ENCODE measurements at regions of chr12 and their contacts with region 1.

Region 1: GRCh38 chr12:44774815-44775411 is 101.2 kb downstream of the NELL2 start:
- DNase-seq: peak; percentile 36 to 91
- H3K4me3 ChIP-seq: no peak overlapping the region
- H3K27ac ChIP-seq: no peak overlapping the region
- H3K4me1 ChIP-seq: peaks cover 0 to 2% (median 2%) of the 10 kb centered on the region in 4 experiments; a peak in 2 of 7 replicates
- H3K27me3 ChIP-seq: no peaks in the 10 kb centered on the region
- CTCF ChIP-seq: peak; percentile 80 to 89 (median 81)
- EP300 ChIP-seq: no peak
- POLR2A ChIP-seq: no peak
- RAD21 ChIP-seq: peak; percentile 67 to 76

Region 2: DNA sequence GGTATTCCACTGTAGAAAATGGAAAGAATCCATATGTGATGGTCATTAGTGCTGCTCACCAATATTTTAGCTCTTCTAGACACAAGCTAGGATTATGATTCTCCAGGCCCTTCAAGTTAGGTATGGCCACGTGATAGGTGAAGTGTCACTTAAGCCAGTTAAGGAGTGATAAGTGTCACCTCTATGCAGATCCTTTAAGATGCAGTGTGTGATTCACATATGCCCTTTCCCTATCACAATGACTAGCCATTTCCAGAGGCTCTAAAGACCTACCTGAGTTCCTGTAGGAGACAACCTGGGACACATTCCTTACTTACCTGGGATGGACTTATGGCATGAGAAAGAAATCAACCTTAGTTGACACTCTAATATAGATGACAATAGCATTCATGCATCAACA is 242.0 kb before region 1 on chr12:
- CTCF ChIA-PET with region 1: no interaction called
- POLR2A ChIA-PET with region 1: no interaction called
- DNase-seq: no peak
- H3K4me3 ChIP-seq: no peak overlapping the region
- H3K27ac ChIP-seq: no peak overlapping the region
- H3K4me1 ChIP-seq: peaks cover 0 to 5% (median 2%) of the 10 kb centered on the region in 4 experiments; a peak in 2 of 7 replicates
- H3K27me3 ChIP-seq: no peaks in the 10 kb centered on the region
- CTCF ChIP-seq: no peak
- EP300 ChIP-seq: no peak
- POLR2A ChIP-seq: no peak
- RAD21 ChIP-seq: no peak

Region 3: GRCh38 chr12:44788731-44789130 is 13.8 kb after region 1 on chr12:
- CTCF ChIA-PET with region 1: interaction called, 27 read pairs
- POLR2A ChIA-PET with region 1: no interaction called
- DNase-seq: no peak
- H3K4me3 ChIP-seq: no peak overlapping the region
- H3K27ac ChIP-seq: no peak overlapping the region
- H3K4me1 ChIP-seq: no peaks in the 10 kb centered on the region
- H3K27me3 ChIP-seq: no peaks in the 10 kb centered on the region
- CTCF ChIP-seq: no peak
- EP300 ChIP-seq: no peak
- POLR2A ChIP-seq: no peak
- RAD21 ChIP-seq: no peak

Region 4: DNA sequence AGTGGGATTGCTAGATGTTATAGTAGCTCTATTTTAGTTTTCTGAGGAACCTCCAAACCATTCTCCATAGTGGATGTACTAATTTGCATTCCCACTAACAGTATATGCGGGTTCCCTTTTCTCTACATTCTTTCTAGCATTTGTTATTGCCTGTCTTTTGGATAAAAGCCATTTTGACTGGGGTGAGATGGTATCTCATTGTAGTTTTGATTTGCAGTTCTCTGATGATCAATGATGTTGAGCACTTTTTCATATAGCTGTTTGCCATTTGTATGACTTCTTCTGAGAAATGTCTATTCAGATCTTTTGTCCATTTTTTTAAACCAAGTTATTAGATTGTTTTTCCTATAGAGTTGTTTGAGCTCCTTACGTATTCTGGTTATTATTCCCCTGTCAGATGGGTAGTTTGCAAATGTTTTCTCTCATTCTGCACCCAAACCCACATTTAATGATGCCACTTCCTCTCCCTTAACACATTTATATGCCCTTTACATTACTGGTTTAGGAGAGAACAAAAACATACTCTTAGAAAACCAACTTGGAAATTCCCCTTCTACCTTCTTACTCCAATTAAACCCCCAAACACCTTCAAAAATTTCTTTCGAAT is 53.0 kb after region 1 on chr12:
- CTCF ChIA-PET with region 1: no interaction called
- POLR2A ChIA-PET with region 1: no interaction called
- DNase-seq: no peak
- H3K4me3 ChIP-seq: no peak overlapping the region
- H3K27ac ChIP-seq: no peak overlapping the region
- H3K4me1 ChIP-seq: peaks cover 0 to 3% (median 0%) of the 10 kb centered on the region in 4 experiments; a peak in 2 of 7 replicates
- H3K27me3 ChIP-seq: no peaks in the 10 kb centered on the region
- CTCF ChIP-seq: no peak
- EP300 ChIP-seq: no peak
- POLR2A ChIP-seq: no peak
- RAD21 ChIP-seq: no peak

Region 5: DNA sequence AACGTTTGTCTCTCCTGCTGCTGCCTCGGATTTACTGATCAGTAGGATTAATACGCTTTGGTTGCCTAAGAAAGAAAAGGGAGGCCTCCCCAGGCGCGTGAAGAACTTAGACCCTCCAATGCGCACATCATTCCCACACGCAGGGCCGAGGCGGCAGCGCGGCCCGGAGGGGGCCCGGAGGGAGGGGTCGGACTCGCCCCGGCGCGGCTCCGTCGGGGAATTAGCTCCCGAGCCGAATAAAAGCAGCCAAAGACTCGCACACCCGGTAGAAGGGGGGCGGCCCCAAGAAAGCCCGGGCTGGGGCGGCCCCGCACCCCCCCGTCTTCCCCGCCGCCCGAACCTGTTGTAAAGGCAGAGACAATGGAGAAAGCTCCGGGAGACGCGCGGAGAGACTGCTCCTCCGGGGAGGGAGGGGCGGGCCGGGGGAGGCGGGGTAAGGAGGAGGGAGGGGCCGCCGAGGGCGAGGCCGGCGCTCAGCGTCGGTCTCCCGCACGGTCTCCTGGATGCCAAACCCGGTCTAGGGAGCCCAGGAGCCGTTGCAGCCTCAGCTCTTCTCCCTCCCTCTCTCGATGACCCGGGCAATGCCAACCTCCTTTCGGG is 101.1 kb after region 1 on chr12 and contains the start of gene NELL2:
- CTCF ChIA-PET with region 1: interaction called, 21 read pairs
- POLR2A ChIA-PET with region 1: no interaction called
- DNase-seq: peak; percentile 49 to 83
- H3K4me3 ChIP-seq: peak within 1 kb of the TSS; percentile 79 to 92 (median 87)
- H3K27ac ChIP-seq: peak within 1 kb of the TSS; percentile 11; the same call in 1 of the 2 replicates
- H3K4me1 ChIP-seq: peaks cover 0 to 5% (median 0%) of the 10 kb centered on the region in 4 experiments; a peak in 1 of 7 replicates
- H3K27me3 ChIP-seq: no peaks in the 10 kb centered on the region; a peak in 1 of 7 replicates
- CTCF ChIP-seq: no peak
- EP300 ChIP-seq: no peak
- POLR2A ChIP-seq: no peak; a peak in 1 of 3 replicates
- RAD21 ChIP-seq: no peak
- total RNA-seq, gene NELL2: 50.6 and 54.2 TPM in 2 replicates